ENCODE measurements at regions of chr15 and their contacts with region 1.

Region 1: GRCh38 chr15:71114896-71115554 is at the start of gene THSD4:
- DNase-seq: peak; percentile 71 to 83 (median 79)
- ATAC-seq: peak; percentile 27 to 71 (median 66)
- H3K4me3 ChIP-seq: peak within 1 kb of the TSS; percentile 57 to 90 (median 71)
- H3K27ac ChIP-seq: peak within 1 kb of the TSS; percentile 78 to 95 (median 90)
- H3K4me1 ChIP-seq: peaks cover 0 to 27% (median 5%) of the 10 kb centered on the region in 12 donors
- H3K27me3 ChIP-seq: peaks cover 0 to 29% (median 0%) of the 10 kb centered on the region in 9 donors
- CTCF ChIP-seq: peak; percentile 91 to 99 (median 96)
- POLR2A ChIP-seq: no peak
- total RNA-seq, gene THSD4: 57.4 to 206 (median 104) TPM

Region 2: GRCh38 chr15:71189718-71190117 is 74.7 kb after region 1 on chr15:
- intact Hi-C with region 1: loop called in 1 of 10 experiments (anchors 5 kb)
- DNase-seq: no peak
- ATAC-seq: no peak
- H3K4me3 ChIP-seq: no peak overlapping the region
- H3K27ac ChIP-seq: peak overlapping the region in 1 of 12 donors; percentile 11
- H3K4me1 ChIP-seq: peaks cover 0 to 26% (median 7%) of the 10 kb centered on the region in 12 donors
- H3K27me3 ChIP-seq: no peaks in the 10 kb centered on the region
- CTCF ChIP-seq: no peak
- POLR2A ChIP-seq: no peak

Region 3: GRCh38 chr15:71212146-71212545 is 97.1 kb after region 1 on chr15:
- intact Hi-C with region 1: no loop called
- DNase-seq: no peak
- ATAC-seq: no peak
- H3K4me3 ChIP-seq: no peak overlapping the region
- H3K27ac ChIP-seq: peak overlapping the region in 4 of 12 donors; percentile 31 to 56 (median 44)
- H3K4me1 ChIP-seq: peaks cover 0 to 37% (median 9%) of the 10 kb centered on the region in 12 donors
- H3K27me3 ChIP-seq: no peaks in the 10 kb centered on the region
- CTCF ChIP-seq: no peak
- POLR2A ChIP-seq: no peak

Region 4: DNA sequence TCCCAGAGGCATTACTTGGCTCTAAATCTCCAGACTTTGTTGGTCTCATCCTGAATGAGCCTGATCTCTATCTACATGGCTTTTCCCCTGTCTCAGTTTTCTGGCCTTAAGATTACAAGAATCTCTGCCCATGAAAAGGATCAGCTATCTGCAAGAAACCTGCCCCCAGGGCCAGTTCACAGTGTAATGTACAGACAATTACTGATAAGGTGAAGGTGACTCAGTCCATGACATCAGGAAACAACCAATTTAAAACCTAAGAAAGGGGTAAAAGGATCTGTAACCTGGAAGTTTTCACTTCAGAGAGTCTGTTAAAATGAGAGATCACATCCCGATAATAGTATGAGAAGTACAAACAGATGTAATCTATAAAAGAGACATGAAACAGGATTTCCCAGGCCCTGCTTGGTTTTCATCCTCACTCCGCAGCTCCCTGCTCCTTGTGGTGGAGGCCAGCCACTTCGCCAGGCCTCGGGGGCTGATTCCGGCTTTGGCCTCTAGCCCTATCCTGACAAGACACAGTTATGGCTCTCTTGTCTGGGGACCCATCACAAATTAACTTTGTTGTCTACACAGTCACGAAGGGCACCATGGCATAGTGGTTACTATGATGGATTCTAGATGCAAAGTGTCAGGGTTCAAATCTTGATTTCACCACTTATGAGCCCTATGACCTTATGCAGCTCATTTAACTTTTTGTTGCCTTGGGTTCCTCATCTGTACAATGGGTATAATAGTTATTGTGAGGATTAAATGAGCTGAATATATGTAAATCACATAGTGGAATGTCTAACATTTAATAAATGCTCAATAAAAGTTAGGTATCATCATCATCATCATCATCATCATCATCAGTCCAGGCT is 137.2 kb after region 1 on chr15:
- intact Hi-C with region 1: loop called in 3 of 10 experiments (anchors 5 to 10 kb)
- DNase-seq: peak in 1 of 5 donors; percentile 46
- ATAC-seq: peak; percentile 36 to 70 (median 36)
- H3K4me3 ChIP-seq: no peak overlapping the region
- H3K27ac ChIP-seq: peak overlapping the region; percentile 28 to 76 (median 64)
- H3K4me1 ChIP-seq: peaks cover 0 to 50% (median 32%) of the 10 kb centered on the region in 12 donors
- H3K27me3 ChIP-seq: no peaks in the 10 kb centered on the region
- CTCF ChIP-seq: peak in 1 of 12 donors; percentile 8
- POLR2A ChIP-seq: no peak

Region 5: GRCh38 chr15:71337207-71337700 is 222.2 kb after region 1 on chr15:
- intact Hi-C with region 1: loop called in 2 of 10 experiments (anchors 5 kb)
- DNase-seq: no peak
- ATAC-seq: peak in 1 of 4 donors; percentile 18
- H3K4me3 ChIP-seq: no peak overlapping the region
- H3K27ac ChIP-seq: peak overlapping the region in 11 of 12 donors; percentile 51 to 94 (median 86)
- H3K4me1 ChIP-seq: peaks cover 0 to 33% (median 6%) of the 10 kb centered on the region in 12 donors
- H3K27me3 ChIP-seq: no peaks in the 10 kb centered on the region
- CTCF ChIP-seq: no peak
- POLR2A ChIP-seq: no peak

Region 6: DNA sequence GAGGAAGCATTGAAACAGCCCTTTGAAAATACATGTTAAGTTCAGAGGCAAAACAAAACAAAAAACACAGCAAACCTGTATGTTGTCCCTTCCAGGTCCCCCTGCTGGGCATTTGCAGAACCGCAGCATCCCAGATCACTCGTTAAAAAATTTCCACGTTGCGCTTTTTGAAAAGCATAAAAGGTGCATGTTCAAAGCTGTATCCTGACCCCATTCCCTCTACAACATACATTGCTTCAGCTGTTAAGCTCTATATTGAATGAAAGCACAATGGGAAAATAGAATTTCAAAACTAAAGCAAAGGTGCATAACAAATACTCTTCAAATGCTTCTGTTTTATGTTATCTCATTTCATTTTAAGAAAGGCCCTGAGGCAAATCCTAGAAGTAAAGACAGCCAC is 328.5 kb after region 1 on chr15:
- intact Hi-C with region 1: loop called (anchors 1 to 5 kb)
- DNase-seq: peak in 3 of 5 donors; percentile 40 to 43 (median 42)
- ATAC-seq: peak in 2 of 4 donors; percentile 7 to 10
- H3K4me3 ChIP-seq: no peak overlapping the region
- H3K27ac ChIP-seq: peak overlapping the region in 5 of 12 donors; percentile 13 to 65 (median 41)
- H3K4me1 ChIP-seq: peaks cover 0 to 50% (median 15%) of the 10 kb centered on the region in 12 donors
- H3K27me3 ChIP-seq: no peaks in the 10 kb centered on the region
- CTCF ChIP-seq: peak; percentile 70 to 88 (median 82)
- POLR2A ChIP-seq: no peak

Measured in heart left ventricle (tissue), 16 donors.